Activated T-helper 2 cell treated with anti-CD3 and anti-CD28 coated beads, Interferon-gamma antibody, Interleukin-2, Interleukin-4, amounts not matched to agents 10 μg/mL and 5 μg/mL and 100 μg/mL, durations not matched to agents 14 hours and 24 hours and 36 hours (primary cell): ENCODE measurements at regions of chr5 and their contacts with region 1.

Region 1: DNA sequence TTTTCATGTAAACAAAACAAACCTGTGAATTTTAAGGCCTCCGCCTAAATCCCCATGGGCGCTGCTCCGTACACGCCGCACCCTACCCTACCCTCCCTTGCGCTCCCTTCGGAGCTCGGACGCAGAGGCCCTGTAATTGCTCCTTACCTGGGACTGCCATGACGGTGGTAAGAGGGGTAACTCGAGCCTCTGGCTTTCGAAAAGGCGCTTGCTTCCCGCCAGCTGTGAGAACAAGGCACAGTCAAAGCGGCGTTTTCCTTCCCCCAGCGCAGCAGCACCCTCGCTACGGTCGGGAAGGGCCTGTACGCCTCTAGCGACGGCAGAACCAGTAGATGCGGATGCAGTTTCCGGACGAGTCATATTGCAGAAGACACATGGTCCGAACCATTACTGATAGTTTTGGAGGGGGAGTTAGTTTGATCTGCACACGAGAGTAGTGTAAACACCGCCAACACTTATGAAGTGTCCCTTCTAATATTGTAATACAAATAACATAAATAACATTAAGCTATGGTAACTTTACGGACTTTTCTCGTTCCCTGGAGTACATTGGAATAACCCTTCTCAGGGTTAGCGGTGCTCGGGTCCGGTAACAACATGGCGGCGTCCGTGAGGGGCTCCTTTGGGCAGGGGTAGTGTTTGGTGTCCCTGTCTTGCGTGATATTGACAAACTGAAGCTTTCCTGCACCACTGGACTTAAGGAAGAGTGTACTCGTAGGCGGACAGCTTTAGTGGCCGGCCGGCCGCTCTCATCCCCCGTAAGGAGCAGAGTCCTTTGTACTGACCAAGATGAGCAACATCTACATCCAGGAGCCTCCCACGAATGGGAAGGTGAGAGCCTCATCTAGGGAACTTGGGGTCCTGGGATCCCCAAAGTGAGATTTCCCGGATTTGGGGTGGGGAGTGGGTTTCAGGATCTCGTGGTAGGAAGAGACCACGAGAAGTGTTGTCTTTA is at the starts of genes CWC27 and SREK1IP1:
- DNase-seq: peak; percentile 79
- H3K4me3 Mint-ChIP-seq: peak within 1 kb of the TSS; percentile 98
- H3K27ac Mint-ChIP-seq: peak within 1 kb of the TSS; percentile 96
- H3K4me1 Mint-ChIP-seq: peaks cover 47% of the 10 kb centered on the region
- H3K27me3 Mint-ChIP-seq: no peaks in the 10 kb centered on the region
- total RNA-seq, gene CWC27: 30.3 and 32.9 TPM in 2 replicates
- total RNA-seq, gene SREK1IP1: 30.9 and 32.9 TPM in 2 replicates

Region 2: GRCh38 chr5:64784451-64785025 is 15.9 kb after region 1 on chr5:
- intact Hi-C with region 1: loop called (anchors 2 kb)
- DNase-seq: peak; percentile 42
- H3K4me3 Mint-ChIP-seq: no peak overlapping the region
- H3K27ac Mint-ChIP-seq: no peak overlapping the region
- H3K4me1 Mint-ChIP-seq: peaks cover 5% of the 10 kb centered on the region
- H3K27me3 Mint-ChIP-seq: no peaks in the 10 kb centered on the region

Region 3: DNA sequence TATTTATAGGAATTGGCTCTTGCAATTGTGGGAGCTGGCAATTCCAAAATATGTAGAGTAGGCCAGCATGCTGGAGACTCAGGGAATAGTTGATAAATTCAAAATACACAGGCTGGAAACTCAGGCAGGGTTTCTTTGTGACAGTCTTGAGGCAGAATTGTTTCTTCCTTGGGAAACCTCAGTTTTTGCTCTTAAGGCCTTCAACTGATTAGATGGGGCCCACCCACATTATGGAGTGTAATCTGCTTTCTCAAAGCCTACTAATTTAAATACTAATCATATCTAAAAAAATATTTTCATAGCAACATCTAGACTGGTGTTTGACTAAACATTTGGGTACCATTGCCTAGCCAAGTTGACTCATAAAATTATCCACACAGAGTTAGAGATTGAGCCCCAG is 27.7 kb after region 1 on chr5:
- intact Hi-C with region 1: no loop called
- DNase-seq: no peak
- H3K4me3 Mint-ChIP-seq: no peak overlapping the region
- H3K27ac Mint-ChIP-seq: no peak overlapping the region
- H3K4me1 Mint-ChIP-seq: no peaks in the 10 kb centered on the region
- H3K27me3 Mint-ChIP-seq: no peaks in the 10 kb centered on the region

Region 4: DNA sequence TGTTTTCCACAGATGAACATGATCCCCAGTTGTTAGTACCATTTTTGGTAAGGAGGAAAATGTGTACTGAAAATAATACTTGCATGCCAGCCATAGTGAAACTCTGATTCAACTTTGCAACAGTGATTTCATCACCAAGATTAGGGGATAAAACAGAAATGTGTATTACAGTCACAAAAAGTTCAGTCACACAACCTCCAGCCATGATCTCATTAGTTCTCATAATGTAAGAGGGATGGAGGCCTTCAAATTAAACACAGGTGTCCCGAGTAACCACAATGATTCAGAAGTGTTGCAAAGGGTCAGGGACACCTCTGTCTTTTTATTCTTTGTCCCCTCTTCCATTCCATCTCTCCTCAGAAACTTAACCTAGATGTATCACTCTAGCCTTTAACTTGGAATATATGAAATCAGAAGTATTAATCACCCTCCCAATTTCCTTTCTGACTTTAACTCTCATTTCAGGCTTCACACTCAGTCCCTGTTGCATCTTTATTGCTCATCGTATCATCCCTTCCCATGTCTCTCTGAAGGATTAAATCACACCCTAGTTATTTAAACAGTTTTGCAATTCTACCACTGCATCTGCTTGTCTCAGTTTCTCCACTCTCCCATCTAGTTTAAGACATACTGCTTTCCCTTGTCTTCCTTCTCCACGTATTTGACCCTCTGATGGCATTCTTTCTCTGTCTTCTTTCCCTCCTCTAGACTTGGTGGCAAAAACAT is 421.9 kb after region 1 on chr5:
- intact Hi-C with region 1: loop called (anchors 1 kb)
- DNase-seq: no peak
- H3K4me3 Mint-ChIP-seq: no peak overlapping the region
- H3K27ac Mint-ChIP-seq: peak overlapping the region; percentile 23
- H3K4me1 Mint-ChIP-seq: peaks cover 8% of the 10 kb centered on the region
- H3K27me3 Mint-ChIP-seq: peaks cover 10% of the 10 kb centered on the region